HCT116 (cell line): ENCODE measurements at regions of chr16 and their contacts with region 1.

Region 1: DNA sequence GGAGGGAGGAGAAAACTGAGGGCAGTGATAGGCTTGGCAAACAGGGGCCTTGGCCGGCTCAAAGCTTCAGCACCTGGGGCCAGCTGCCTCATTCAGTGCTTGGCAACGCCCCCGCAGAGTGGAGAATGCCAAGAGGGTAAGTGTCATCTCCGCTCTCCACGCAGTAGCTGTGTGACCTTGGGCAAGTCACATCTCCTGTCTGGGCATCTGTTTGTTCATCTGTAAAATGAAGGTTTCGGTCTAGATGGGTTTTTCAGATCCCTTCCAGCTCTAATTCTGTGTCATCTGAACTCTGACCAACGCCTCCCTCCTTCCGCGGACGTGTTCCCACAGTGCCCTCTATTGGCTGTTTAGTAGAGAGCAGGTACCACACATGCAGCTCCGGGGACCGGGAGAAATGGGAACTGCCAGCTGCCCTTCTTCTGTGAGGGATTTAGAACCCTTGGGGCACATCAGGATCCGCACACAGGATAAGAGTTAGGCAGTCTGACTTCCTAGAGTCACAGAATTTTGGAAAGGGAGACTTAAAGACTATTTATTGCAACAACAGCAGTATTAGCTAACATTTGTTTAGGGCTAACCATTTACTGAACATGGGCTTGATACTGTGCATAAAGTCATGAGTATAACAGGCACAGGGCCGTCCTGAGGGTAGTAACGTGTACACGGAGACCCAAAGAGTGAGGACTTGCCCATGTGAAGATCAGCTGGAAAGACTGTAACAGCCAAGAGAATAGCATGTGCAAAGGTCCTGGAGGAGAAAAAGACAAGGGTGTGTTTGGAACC is 26.8 kb downstream of the GP2 start:
- DNase-seq: peak; percentile 42
- ATAC-seq: peak; percentile 98
- H3K4me3 ChIP-seq: no peak overlapping the region
- H3K27ac ChIP-seq: no peak overlapping the region
- H3K4me1 ChIP-seq: no peaks in the 10 kb centered on the region
- H3K27me3 ChIP-seq: peaks cover 39% of the 10 kb centered on the region
- CTCF ChIP-seq: peak; percentile 62 to 85 (median 82); a peak in 5 of 6 replicates
- POLR2A ChIP-seq: no peak
- RAD21 ChIP-seq: peak; percentile 84

Region 2: DNA sequence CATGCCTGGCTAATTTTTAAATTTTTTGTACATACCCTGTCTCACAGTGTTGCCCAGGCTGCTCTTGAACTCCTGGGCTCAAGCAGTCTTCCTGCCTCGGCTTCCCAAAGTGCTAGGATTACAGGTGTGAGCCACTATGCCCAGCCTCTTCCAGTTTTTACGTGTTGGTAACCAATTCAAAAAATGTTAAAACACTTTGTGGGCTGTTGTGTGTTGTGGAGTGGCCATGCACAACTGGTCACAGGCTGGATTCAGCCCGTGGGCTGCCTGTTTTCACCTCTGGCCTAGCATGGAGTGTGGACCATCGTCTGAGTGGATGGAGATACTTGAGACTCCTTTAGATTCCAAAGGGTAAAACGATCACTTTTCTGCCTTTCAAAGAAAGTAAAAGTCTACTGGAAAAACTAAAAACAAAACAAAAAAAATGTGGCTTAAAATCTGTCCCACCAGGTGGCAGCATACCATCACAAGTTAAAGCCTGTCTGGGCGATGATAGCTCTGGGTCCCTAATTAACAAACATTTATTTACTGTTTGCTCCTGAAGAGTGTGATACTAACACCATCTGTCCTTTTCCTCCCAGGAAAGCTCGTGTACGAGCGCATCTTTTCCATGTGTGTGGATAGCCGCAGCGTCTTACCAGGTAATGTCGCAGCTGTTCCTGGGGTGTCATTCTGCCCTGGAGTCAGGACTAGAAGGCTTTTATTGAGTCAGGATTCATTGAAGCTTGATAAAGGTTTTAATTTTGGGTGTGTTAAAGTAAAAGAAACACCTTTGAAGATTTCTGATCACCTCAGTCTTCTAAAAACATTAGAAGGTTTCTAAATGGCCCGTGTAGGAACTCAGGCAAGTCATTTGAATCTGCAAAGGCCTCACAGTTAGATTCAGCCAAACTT is 699.2 kb before region 1 on chr16:
- CTCF ChIA-PET with region 1: interaction called, 4 read pairs
- POLR2A ChIA-PET with region 1: no interaction called
- RAD21 ChIA-PET with region 1: no interaction called
- intact Hi-C with region 1: loop called (anchors 10 kb)
- DNase-seq: peak; percentile 36
- ATAC-seq: peak; percentile 67
- H3K4me3 ChIP-seq: no peak overlapping the region
- H3K27ac ChIP-seq: no peak overlapping the region
- H3K4me1 ChIP-seq: no peaks in the 10 kb centered on the region; a peak in 1 of 4 replicates
- H3K27me3 ChIP-seq: no peaks in the 10 kb centered on the region
- CTCF ChIP-seq: peak; percentile 56 to 86 (median 78); a peak in 5 of 6 replicates
- POLR2A ChIP-seq: no peak
- RAD21 ChIP-seq: peak; percentile 91

Region 3: GRCh38 chr16:19898924-19899604 is 401.4 kb before region 1 on chr16:
- CTCF ChIA-PET with region 1: interaction called, 46 read pairs
- POLR2A ChIA-PET with region 1: no interaction called
- RAD21 ChIA-PET with region 1: interaction called in 1 of 2 experiments, 3 read pairs
- intact Hi-C with region 1: loop called (anchors 2 kb)
- DNase-seq: peak; percentile 57
- ATAC-seq: peak; percentile 89
- H3K4me3 ChIP-seq: no peak overlapping the region
- H3K27ac ChIP-seq: no peak overlapping the region
- H3K4me1 ChIP-seq: peaks cover 4 to 6% of the 10 kb centered on the region in 2 experiments; a peak in 2 of 4 replicates
- H3K27me3 ChIP-seq: no peaks in the 10 kb centered on the region
- CTCF ChIP-seq: peak; percentile 69 to 88 (median 83)
- POLR2A ChIP-seq: no peak
- RAD21 ChIP-seq: peak; percentile 75

Region 4: DNA sequence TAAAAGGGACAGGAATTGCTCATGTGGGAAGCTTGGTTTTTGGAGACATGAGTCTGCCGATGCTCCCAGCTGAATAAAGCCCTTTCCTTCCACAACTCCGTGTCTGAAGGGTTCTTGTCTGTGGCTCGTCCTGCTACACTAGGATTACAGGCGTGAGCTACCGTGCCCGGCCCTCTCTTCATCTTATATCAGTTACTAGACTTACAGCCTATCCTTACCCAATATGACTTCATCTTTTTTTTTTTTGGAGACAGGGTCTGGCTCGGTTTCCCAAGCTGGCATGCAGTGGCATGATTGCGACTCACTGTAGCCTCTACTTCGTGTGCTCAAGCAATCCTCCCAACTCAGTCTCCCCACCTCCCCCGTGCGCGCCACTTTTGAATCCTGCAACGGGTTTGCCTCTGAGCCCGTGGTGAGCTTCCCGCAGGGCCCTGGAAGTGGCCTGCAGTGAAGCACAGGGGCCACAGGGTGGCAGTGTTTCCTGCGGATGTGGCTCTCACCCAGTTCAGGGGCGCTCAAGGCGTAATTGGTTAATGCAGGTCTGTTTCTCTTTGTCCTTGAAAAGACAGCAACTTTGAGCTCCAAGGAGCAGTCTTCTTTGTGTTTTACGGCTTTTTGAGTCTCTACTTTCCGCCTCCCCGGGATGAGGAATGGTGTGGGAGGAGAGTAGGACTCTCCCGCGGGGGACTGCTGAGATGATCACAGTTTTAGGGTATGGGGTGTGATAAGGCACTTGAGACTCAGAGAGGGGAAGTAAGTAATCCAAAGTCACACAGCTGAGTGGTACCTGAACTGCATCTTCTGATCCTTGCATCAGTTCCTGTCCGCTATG is 393.1 kb before region 1 on chr16:
- CTCF ChIA-PET with region 1: interaction called, 232 read pairs
- POLR2A ChIA-PET with region 1: interaction called, 8 read pairs
- RAD21 ChIA-PET with region 1: interaction called, 23 to 28 read pairs
- intact Hi-C with region 1: loop called (anchors 1 kb)
- DNase-seq: peak; percentile 62
- ATAC-seq: peak; percentile 99
- H3K4me3 ChIP-seq: no peak overlapping the region
- H3K27ac ChIP-seq: no peak overlapping the region
- H3K4me1 ChIP-seq: peaks cover 0 to 8% of the 10 kb centered on the region in 2 experiments; a peak in 2 of 4 replicates
- H3K27me3 ChIP-seq: no peaks in the 10 kb centered on the region
- CTCF ChIP-seq: peak; percentile 95 to 99 (median 98)
- POLR2A ChIP-seq: no peak
- RAD21 ChIP-seq: peak; percentile 94

Region 5: GRCh38 chr16:19912455-19913339 is 387.8 kb before region 1 on chr16:
- CTCF ChIA-PET with region 1: interaction called, 232 read pairs
- POLR2A ChIA-PET with region 1: interaction called, 8 read pairs
- RAD21 ChIA-PET with region 1: interaction called, 23 to 28 read pairs
- intact Hi-C with region 1: loop called (anchors 1 kb)
- DNase-seq: peak; percentile 8
- ATAC-seq: peak; percentile 27; the same call in 1 of the 2 replicates
- H3K4me3 ChIP-seq: no peak overlapping the region
- H3K27ac ChIP-seq: no peak overlapping the region
- H3K4me1 ChIP-seq: peaks cover 0 to 5% of the 10 kb centered on the region in 2 experiments; a peak in 1 of 4 replicates
- H3K27me3 ChIP-seq: no peaks in the 10 kb centered on the region
- CTCF ChIP-seq: no peak
- POLR2A ChIP-seq: no peak
- RAD21 ChIP-seq: no peak

Region 6: DNA sequence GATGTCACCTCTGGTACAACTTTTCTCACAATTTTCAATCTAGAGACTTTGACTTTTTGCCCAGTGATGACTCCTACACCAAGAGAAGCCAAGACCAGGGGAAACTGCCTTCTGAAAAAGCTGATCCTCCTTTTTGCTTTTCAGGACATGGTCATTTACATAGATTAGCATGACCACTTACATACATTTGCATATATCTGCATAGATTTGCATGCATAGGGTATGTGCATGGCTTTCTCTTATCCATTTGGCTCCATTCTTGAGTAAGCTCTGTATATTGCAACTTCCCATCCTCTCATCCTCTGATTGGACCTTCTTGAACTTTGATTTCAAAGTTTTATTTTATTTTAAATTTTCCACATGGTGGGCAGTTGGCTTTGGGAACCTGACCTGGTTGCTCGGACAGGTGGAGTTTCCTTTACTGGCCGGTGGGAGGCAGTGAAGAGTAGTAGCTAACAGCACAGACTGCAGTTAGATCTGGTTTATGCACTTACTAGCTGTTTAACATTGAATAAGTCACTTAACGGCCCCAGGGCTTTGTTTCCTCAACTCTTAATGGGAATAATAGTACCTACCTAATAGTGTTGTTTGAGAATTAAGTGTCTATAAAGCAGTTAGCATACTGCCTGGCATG is 319.8 kb before region 1 on chr16:
- CTCF ChIA-PET with region 1: interaction called, 6 read pairs
- POLR2A ChIA-PET with region 1: no interaction called
- RAD21 ChIA-PET with region 1: no interaction called
- intact Hi-C with region 1: loop called (anchors 5 kb)
- DNase-seq: peak; percentile 21
- ATAC-seq: peak; percentile 91
- H3K4me3 ChIP-seq: no peak overlapping the region
- H3K27ac ChIP-seq: no peak overlapping the region
- H3K4me1 ChIP-seq: no peaks in the 10 kb centered on the region
- H3K27me3 ChIP-seq: peaks cover 40% of the 10 kb centered on the region; the same call in 1 of the 2 replicates
- CTCF ChIP-seq: peak; percentile 19 to 83 (median 67); a peak in 5 of 6 replicates
- POLR2A ChIP-seq: no peak
- RAD21 ChIP-seq: peak; percentile 35; the same call in 1 of the 2 replicates

Region 7: GRCh38 chr16:20383106-20384029 is 82.9 kb after region 1 on chr16:
- CTCF ChIA-PET with region 1: interaction called, 36 read pairs
- POLR2A ChIA-PET with region 1: no interaction called
- RAD21 ChIA-PET with region 1: interaction called in 1 of 2 experiments, 5 read pairs
- intact Hi-C with region 1: loop called (anchors 2 kb)
- DNase-seq: peak; percentile 71
- ATAC-seq: peak; percentile 92
- H3K4me3 ChIP-seq: no peak overlapping the region
- H3K27ac ChIP-seq: no peak overlapping the region
- H3K4me1 ChIP-seq: no peaks in the 10 kb centered on the region
- H3K27me3 ChIP-seq: peaks cover under 1% of the 10 kb centered on the region; the same call in 1 of the 2 replicates
- CTCF ChIP-seq: peak; percentile 69 to 83 (median 76)
- POLR2A ChIP-seq: no peak
- RAD21 ChIP-seq: peak; percentile 81